HEK293 (cell line): ENCODE measurements at regions of chr19 and their contacts with region 1.

Region 1: DNA sequence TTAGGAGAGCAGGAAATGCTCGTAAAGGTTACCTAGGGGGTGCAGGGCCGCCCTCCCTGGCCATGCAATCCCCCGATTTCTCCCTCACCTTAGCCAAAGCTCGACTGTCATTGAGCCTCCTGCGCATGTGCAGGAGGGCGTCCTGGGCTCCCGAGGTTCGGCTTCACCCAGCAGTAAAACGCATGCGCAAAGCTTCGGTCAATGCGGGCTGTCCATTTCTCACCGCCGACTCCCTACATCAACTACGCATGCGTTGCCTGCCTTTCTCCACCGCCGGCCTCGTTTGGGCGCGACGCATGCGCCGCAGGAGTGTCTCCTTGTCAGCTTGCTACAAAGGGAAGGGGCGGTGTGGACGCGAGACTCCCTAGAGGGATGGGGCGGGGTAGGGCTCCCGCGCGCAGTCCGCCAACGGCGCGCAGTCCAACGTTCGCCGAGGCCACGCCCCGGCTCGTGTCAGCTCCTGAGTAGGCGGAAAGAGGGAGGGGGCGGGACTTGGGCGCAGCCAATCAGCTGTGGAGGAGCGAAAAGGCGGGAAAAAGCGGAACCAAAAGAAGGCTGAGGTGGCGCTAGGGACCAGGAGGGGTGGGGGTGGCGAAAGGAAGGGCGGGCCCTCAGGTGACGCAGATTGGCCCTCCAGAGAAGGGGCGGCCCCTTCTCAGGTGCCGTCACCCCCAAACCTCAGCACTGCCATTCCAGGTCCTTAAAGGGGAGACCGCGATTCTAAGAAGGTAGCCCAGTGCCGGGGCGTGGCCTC is at the starts of genes SYNGR4 and TMEM143:
- H3K4me3 ChIP-seq: peak within 1 kb of the TSS; percentile 54
- H3K27ac ChIP-seq: peak within 1 kb of the TSS; percentile 89
- H3K4me1 ChIP-seq: peaks cover 4% of the 10 kb centered on the region; the same call in 1 of the 2 replicates
- CTCF ChIP-seq: peak; percentile 34; the same call in 1 of the 2 replicates

Region 2: DNA sequence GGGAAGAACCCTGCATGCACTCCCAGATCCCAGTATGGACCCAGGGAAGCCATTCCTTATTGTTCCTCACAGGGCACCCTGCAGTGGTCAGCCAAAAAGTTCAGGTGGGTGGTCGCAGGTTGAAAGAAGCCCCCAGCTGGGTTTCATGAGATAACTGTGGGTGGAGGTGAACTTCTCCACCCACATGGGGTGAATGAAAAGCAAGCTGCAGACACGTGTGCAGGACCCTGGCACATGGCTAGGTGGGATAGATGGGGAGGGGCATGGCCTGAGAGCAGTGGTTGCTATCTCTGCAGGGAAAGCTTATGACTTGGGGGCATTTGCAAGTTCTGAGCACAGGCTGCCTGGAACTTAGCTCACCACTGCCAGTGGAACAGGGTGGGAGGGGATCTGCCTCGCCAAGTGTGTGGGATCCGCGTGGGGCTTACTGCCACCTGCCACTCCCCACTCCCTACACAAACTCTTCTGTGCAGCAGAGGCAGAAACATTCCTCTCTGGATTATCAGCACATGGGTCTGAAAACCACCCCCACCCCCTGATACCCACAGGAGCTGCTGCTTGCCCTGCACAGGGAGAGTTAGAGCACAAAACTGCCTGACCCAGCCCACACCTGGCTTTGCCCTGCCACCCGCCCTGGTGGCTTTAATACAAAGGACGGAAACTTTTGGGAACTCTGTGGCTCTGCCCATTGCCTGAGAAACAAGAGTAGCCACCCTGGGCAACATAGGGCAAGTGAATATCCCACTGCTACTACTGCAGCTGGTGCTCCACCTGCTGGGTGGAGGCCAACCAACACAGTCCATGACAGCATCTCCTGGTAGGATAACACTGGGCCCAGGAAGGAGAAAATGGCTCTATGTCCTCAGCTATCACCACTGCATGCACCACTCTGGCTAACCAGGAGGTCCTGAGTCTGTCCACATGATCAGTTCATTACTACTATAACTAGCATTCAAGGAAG is 277.8 kb before region 1 on chr19:
- CTCF ChIA-PET with region 1: no interaction called
- POLR2A ChIA-PET with region 1: no interaction called
- H3K4me3 ChIP-seq: no peak overlapping the region
- H3K27ac ChIP-seq: no peak overlapping the region
- H3K4me1 ChIP-seq: no peaks in the 10 kb centered on the region
- CTCF ChIP-seq: 0 out of 2 replicates have a peak, but pooled peaks have one; percentile 8

Region 3: DNA sequence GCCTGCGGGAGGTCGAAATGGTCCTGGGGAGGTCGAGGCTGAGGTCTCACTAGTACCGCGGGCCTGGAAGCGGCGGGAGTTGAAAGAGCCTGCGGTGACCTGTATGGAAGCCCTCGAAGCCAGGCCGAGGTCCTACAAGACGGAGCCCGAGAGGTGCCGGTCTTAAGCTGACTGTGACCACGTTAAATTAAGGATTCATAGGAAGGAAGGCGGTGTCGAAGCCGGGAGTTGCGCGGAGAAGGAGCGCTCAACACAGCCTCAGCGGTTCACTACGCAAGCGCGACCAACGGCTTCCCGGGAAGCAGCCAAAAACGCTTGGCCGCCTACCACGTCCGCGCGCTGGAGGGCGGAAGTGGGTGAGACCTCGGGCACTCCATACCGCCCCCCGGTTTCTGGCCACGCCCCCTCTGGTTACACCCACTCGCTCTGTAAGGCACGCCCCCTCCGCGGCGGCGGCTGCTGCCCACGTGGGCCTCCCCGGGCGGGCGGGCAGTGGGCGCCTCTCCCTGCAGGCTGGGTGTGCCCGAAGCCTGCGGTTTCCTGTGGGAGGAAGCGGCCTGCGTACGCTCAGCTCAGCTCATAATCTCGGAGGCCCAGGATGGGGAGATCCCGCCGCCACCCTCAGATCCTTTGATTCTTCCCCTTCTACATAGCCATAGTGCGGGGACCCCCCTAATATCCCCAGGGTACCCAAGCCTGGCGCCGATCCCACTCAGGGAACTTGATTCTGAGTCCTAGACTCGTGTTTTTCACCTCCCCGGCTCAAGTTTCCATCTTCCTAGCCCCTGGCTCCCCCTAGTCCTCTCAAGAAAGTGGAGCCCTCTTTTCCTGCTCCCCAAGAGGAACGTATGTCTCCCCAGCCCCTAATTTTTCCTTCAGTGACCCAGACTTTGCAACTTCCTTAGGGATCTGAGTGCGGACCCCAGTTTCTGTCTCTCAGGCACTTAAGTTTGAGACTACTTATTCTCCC is 42.1 kb before region 1 on chr19:
- CTCF ChIA-PET with region 1: interaction called, 5 read pairs
- POLR2A ChIA-PET with region 1: interaction called, 19 read pairs
- H3K4me3 ChIP-seq: peak overlapping the region; percentile 49
- H3K27ac ChIP-seq: peak overlapping the region; percentile 88
- H3K4me1 ChIP-seq: peaks cover 18% of the 10 kb centered on the region
- CTCF ChIP-seq: peak; percentile 74

Region 4: GRCh38 chr19:48332662-48333466 is 31.1 kb before region 1 on chr19:
- CTCF ChIA-PET with region 1: interaction called, 9 read pairs
- POLR2A ChIA-PET with region 1: interaction called, 54 read pairs
- H3K4me3 ChIP-seq: peak overlapping the region; percentile 26
- H3K27ac ChIP-seq: peak overlapping the region; percentile 85
- H3K4me1 ChIP-seq: peaks cover 15% of the 10 kb centered on the region
- CTCF ChIP-seq: no peak

Region 5: GRCh38 chr19:48351341-48351752 is 12.6 kb before region 1 on chr19:
- CTCF ChIA-PET with region 1: interaction called, 18 read pairs
- POLR2A ChIA-PET with region 1: interaction called, 7 read pairs
- H3K4me3 ChIP-seq: no peak overlapping the region
- H3K27ac ChIP-seq: no peak overlapping the region
- H3K4me1 ChIP-seq: no peaks in the 10 kb centered on the region
- CTCF ChIP-seq: peak; percentile 80

Region 6: GRCh38 chr19:48379058-48379457 is 15.1 kb after region 1 on chr19:
- CTCF ChIA-PET with region 1: interaction called, 4 read pairs
- POLR2A ChIA-PET with region 1: interaction called, 15 read pairs
- H3K4me3 ChIP-seq: no peak overlapping the region
- H3K27ac ChIP-seq: no peak overlapping the region; the same call in 1 of the 2 replicates
- H3K4me1 ChIP-seq: no peaks in the 10 kb centered on the region
- CTCF ChIP-seq: no peak

Region 7: GRCh38 chr19:48445606-48446481 is 81.9 kb after region 1 on chr19 and contains the start of gene GRWD1:
- CTCF ChIA-PET with region 1: no interaction called
- POLR2A ChIA-PET with region 1: interaction called, 14 read pairs
- H3K4me3 ChIP-seq: peak within 1 kb of the TSS; percentile 88
- H3K27ac ChIP-seq: peak within 1 kb of the TSS; percentile 65
- H3K4me1 ChIP-seq: peaks cover 8% of the 10 kb centered on the region
- CTCF ChIP-seq: peak; percentile 18; the same call in 1 of the 2 replicates

Region 8: GRCh38 chr19:48492925-48493717 is 129.1 kb after region 1 on chr19:
- CTCF ChIA-PET with region 1: no interaction called
- POLR2A ChIA-PET with region 1: interaction called, 10 read pairs
- H3K4me3 ChIP-seq: peak overlapping the region; percentile 23
- H3K27ac ChIP-seq: no peak overlapping the region
- H3K4me1 ChIP-seq: peaks cover 6% of the 10 kb centered on the region
- CTCF ChIP-seq: no peak

Region 9: DNA sequence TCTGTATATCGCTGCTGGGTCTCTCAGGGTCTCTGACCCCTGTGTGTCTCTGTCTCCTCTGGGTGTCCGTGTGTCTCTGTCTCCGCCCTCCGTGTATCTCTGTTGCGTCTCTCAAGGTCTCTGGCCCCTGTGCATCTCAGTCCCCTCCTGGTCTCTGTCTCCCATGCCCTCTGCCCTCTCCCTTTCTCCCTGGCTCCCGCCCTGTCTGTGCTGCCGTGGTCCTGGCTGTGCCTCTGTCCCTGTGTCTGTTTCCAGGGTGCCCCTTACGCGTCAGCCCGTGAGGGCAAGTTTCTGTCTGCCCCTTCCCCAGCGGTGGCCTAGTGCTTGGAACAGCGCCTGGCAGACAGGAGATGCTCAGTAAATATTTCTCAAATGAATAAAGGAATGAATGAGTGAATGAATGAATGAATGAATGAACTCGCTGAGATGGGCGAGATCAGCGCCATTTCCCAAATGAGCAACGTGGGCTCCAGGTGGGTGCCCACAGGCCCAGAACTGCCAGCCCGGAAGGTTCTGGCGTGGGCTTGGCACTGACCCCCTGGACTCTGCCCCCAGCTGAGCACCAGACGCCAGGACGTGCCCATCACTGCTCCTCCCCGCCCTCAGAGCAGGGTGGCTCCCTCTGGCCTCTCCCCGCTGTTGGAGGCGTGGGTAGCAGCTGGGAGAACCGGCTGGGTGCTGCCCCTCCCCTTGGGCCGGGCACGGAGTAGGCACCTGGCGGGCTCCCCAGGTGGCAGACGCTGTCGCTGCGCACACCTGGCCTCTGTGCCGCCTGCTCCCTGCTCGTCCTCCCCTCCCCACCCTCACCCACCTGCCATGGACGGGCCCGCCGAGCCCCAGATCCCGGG is 187.7 kb after region 1 on chr19 and contains the start of gene SULT2B1:
- CTCF ChIA-PET with region 1: no interaction called
- POLR2A ChIA-PET with region 1: no interaction called
- H3K4me3 ChIP-seq: no peak within 1 kb of the TSS
- H3K27ac ChIP-seq: no peak within 1 kb of the TSS
- H3K4me1 ChIP-seq: peaks cover 3% of the 10 kb centered on the region; the same call in 1 of the 2 replicates
- CTCF ChIP-seq: no peak

Region 10: DNA sequence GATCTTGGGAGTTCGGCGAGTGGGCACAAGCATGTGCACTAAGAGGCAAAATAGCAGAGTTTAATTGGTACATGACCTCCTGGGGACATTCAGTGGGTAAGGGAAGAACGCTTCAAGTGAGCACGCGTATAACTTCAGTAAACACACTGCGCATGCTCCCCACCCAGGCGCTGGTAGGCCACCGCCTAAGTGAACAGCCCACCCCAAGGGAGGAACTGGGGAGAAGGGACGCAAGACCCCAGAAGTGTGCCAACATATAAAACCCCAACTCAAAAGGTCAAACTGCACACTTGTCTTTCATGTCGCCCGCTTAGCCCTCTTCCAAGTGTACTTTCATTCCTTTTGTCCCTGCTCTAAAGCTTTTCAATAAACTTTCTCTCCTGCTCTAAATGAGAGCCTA is 319.4 kb after region 1 on chr19:
- CTCF ChIA-PET with region 1: no interaction called
- POLR2A ChIA-PET with region 1: no interaction called
- H3K4me3 ChIP-seq: no peak overlapping the region
- H3K27ac ChIP-seq: no peak overlapping the region
- H3K4me1 ChIP-seq: no peaks in the 10 kb centered on the region; the same call in 1 of the 2 replicates
- CTCF ChIP-seq: no peak